Activated CD4-positive, alpha-beta T cell treated with anti-CD3 and anti-CD28 coated beads for 36 hours (primary cell): ENCODE measurements at regions of chr4 and their contacts with region 1.

Region 1: DNA sequence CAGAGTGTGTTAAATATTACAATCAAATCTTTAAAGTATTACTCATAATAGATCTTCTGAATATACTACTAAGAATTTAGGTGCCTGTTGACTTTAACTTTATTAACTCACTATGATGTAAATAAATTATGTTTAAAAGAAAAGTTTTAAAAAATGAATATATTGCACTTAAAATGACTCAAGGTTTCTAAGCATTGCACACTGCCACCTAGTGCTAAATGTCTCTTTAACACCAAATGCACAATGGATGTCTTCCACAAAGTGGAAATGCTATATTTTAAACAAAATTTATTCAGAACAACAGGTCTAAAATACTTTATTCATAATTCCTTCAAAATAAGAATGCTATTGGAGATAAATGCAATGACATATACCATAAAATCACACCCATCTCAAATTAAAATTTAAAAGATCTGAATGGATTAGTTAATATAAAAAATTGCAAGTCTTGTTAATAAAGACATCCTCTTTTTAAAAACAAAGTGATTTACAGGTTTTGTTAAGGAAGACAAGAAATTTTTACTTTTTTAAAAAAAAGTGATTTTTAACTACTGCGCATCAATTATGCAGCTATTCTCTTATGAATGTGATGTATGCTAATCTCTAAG is 5.5 kb downstream of the INPP4B start:
- DNase-seq: peak; percentile 8
- ATAC-seq: no peak
- H3K4me3 Mint-ChIP-seq: no peak overlapping the region
- H3K27ac Mint-ChIP-seq: no peak overlapping the region
- H3K4me1 Mint-ChIP-seq: peaks cover 31% of the 10 kb centered on the region
- H3K27me3 Mint-ChIP-seq: no peaks in the 10 kb centered on the region

Region 2: GRCh38 chr4:142126890-142127497 is 713.6 kb before region 1 on chr4:
- CTCF ChIA-PET with region 1: interaction called, 6 read pairs
- POLR2A ChIA-PET with region 1: no interaction called
- intact Hi-C with region 1: loop called in 1 of 2 experiments (anchors 1 kb)
- DNase-seq: peak; percentile 75
- ATAC-seq: peak; percentile 74
- H3K4me3 Mint-ChIP-seq: no peak overlapping the region
- H3K27ac Mint-ChIP-seq: no peak overlapping the region
- H3K4me1 Mint-ChIP-seq: peaks cover 32% of the 10 kb centered on the region
- H3K27me3 Mint-ChIP-seq: no peaks in the 10 kb centered on the region

Region 3: GRCh38 chr4:142824368-142824767 is 16.3 kb before region 1 on chr4:
- CTCF ChIA-PET with region 1: interaction called, 4 read pairs
- POLR2A ChIA-PET with region 1: no interaction called
- intact Hi-C with region 1: loop called in 1 of 2 experiments (anchors 2 kb)
- DNase-seq: no peak
- ATAC-seq: peak; percentile 96
- H3K4me3 Mint-ChIP-seq: peak overlapping the region; percentile 9
- H3K27ac Mint-ChIP-seq: peak overlapping the region; percentile 63
- H3K4me1 Mint-ChIP-seq: peaks cover 18% of the 10 kb centered on the region
- H3K27me3 Mint-ChIP-seq: no peaks in the 10 kb centered on the region